Activated CD4-positive, alpha-beta memory T cell treated with anti-CD3 and anti-CD28 coated beads for 36 hours (primary cell): ENCODE measurements at regions of chr16 and their contacts with region 1.

Region 1: DNA sequence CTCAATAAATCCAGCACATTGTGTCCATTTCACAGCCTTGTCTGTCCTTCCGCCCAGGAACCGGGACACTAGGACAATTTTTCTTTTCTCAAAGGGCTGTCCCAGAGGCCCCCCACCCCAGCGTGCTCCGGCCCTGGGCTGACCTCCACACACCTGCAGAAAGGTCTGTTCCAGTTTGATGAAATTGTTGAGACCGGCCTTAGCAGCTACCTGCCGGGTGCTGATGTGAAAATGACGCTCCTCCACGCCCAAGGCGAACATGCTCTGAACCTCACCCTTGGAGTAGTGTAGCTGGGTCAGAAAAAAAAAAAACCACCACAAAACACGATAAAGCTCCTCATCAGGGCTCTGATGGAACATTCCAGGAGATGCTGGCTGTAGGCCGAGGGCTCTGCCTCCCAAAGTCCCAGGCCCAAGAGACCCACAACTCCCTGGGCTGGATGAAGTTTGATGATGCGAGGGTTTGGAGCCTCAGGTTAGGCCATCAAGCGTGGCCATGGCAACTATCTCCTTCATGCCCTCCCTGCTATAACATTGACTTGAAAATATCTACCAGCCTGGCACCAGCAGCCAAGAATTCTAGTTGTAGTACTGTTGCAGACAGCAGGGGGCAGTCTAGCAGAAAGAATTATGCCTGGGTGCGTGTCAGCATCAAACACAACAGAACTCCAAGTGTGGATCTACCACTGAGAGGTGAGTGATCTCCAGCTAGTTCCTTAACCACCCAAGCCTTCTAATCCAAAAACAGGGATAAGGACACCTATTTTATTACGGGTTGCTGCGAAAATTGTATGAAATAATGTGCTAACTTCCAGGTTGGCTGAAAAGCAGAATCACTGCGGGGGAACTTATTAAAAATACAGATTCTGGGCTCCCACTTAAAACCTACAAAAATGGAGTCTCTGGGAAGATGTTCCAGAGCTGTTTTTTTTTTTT is 62.1 kb downstream of the RMI2 start:
- DNase-seq: peak; percentile 75
- H3K4me3 Mint-ChIP-seq: no peak overlapping the region
- H3K27ac Mint-ChIP-seq: no peak overlapping the region
- H3K4me1 Mint-ChIP-seq: no peaks in the 10 kb centered on the region
- H3K27me3 Mint-ChIP-seq: no peaks in the 10 kb centered on the region

Region 2: GRCh38 chr16:10971560-10971961 is 435.8 kb before region 1 on chr16:
- CTCF ChIA-PET with region 1: interaction called, 11 read pairs
- POLR2A ChIA-PET with region 1: no interaction called
- intact Hi-C with region 1: no loop called
- DNase-seq: peak; percentile 36
- H3K4me3 Mint-ChIP-seq: no peak overlapping the region
- H3K27ac Mint-ChIP-seq: no peak overlapping the region
- H3K4me1 Mint-ChIP-seq: peaks cover 49% of the 10 kb centered on the region
- H3K27me3 Mint-ChIP-seq: no peaks in the 10 kb centered on the region

Region 3: GRCh38 chr16:11396241-11397048 is 10.9 kb before region 1 on chr16:
- CTCF ChIA-PET with region 1: interaction called, 54 read pairs
- POLR2A ChIA-PET with region 1: no interaction called
- intact Hi-C with region 1: no loop called
- DNase-seq: peak; percentile 76
- H3K4me3 Mint-ChIP-seq: no peak overlapping the region
- H3K27ac Mint-ChIP-seq: no peak overlapping the region
- H3K4me1 Mint-ChIP-seq: no peaks in the 10 kb centered on the region
- H3K27me3 Mint-ChIP-seq: no peaks in the 10 kb centered on the region

Region 4: GRCh38 chr16:11639925-11640899 is 232.9 kb after region 1 on chr16:
- CTCF ChIA-PET with region 1: interaction called, 16 read pairs
- POLR2A ChIA-PET with region 1: no interaction called
- intact Hi-C with region 1: loop called (anchors 1 kb)
- DNase-seq: no peak
- H3K4me3 Mint-ChIP-seq: no peak overlapping the region
- H3K27ac Mint-ChIP-seq: no peak overlapping the region
- H3K4me1 Mint-ChIP-seq: peaks cover 5% of the 10 kb centered on the region
- H3K27me3 Mint-ChIP-seq: no peaks in the 10 kb centered on the region

Region 5: GRCh38 chr16:11806721-11807120 is 399.4 kb after region 1 on chr16:
- CTCF ChIA-PET with region 1: no interaction called
- POLR2A ChIA-PET with region 1: no interaction called
- intact Hi-C with region 1: loop called (anchors 5 kb)
- DNase-seq: no peak
- H3K4me3 Mint-ChIP-seq: no peak overlapping the region
- H3K27ac Mint-ChIP-seq: no peak overlapping the region
- H3K4me1 Mint-ChIP-seq: peaks cover 7% of the 10 kb centered on the region
- H3K27me3 Mint-ChIP-seq: no peaks in the 10 kb centered on the region